ENCODE measurements at regions of chr5 and their contacts with region 1.

Region 1: DNA sequence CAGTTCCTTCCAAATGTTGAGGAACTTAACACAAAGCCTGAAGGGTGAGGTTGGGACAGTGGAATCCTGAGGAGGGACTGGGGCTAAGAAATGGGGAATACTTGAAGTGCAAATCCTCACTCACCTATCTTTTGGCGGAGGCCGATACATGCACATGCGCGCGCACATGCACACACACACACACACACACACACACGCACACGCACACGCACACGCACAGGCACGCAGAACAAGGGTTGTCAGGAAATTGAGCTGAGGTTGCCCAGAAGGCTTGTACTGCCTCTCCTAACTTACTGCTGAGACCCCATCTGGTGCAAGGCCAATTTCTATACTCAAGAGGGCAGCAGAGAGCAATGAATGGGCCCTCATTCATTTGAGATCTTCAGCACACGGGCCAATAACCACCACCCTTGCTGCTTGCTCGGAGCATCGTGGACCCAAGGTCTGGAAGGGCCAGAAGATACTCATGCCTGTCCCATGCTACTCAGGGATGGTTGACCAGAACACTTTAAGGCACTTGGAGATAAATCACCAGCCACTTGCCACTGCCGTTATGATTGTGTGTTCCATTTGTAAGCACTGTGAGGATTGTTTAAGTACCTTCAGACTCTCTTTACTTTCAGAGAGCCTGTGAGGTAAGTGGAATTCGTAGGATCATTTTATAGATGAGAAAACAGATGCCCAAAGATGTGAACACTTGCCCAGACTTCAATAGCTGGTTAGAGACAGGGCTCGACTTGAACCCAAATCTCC is 21.5 kb downstream of the BTF3 start:
- DNase-seq: no peak
- H3K4me3 ChIP-seq: no peak overlapping the region
- H3K27me3 ChIP-seq: no peaks in the 10 kb centered on the region
- CTCF ChIP-seq: peak; percentile 85

Region 2: DNA sequence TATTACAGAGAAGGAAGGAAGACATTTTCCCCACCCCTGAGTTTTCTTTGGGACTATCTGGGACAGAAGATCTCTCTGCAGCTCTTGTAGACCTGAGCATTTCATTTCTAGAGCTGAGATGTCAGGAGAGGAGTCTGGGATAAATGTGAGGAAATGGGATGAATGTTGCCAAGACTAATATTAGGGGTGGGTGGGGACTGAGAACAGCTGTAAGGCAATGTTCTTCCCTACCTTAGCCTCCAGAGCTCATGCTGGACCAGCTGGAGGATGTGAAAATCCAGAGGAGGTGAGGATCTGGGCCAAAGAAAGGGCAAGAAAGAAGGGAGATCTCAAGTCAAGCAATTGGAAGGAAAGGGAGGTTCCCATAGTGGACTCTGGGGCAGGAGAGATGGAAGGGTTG is 48.1 kb before region 1 on chr5:
- CTCF ChIA-PET with region 1: no interaction called
- POLR2A ChIA-PET with region 1: no interaction called
- DNase-seq: no peak
- H3K4me3 ChIP-seq: no peak overlapping the region
- H3K27me3 ChIP-seq: no peaks in the 10 kb centered on the region
- CTCF ChIP-seq: no peak

Region 3: GRCh38 chr5:73507062-73507461 is 12.6 kb before region 1 on chr5:
- CTCF ChIA-PET with region 1: interaction called, 33 read pairs
- POLR2A ChIA-PET with region 1: no interaction called
- DNase-seq: no peak
- H3K4me3 ChIP-seq: no peak overlapping the region
- H3K27me3 ChIP-seq: no peaks in the 10 kb centered on the region
- CTCF ChIP-seq: no peak